ENCODE measurements at regions of chr17 and their contacts with region 1.

Region 1: GRCh38 chr17:68205251-68205807 is 42.5 kb upstream of the AMZ2 start:
- DNase-seq: peak; percentile 95
- ATAC-seq: peak; percentile 89
- H3K4me3 Mint-ChIP-seq: peak overlapping the region; percentile 86
- H3K27ac Mint-ChIP-seq: peak overlapping the region; percentile 88
- H3K4me1 Mint-ChIP-seq: peaks cover 28% of the 10 kb centered on the region
- H3K27me3 Mint-ChIP-seq: peaks cover 8% of the 10 kb centered on the region

Region 2: DNA sequence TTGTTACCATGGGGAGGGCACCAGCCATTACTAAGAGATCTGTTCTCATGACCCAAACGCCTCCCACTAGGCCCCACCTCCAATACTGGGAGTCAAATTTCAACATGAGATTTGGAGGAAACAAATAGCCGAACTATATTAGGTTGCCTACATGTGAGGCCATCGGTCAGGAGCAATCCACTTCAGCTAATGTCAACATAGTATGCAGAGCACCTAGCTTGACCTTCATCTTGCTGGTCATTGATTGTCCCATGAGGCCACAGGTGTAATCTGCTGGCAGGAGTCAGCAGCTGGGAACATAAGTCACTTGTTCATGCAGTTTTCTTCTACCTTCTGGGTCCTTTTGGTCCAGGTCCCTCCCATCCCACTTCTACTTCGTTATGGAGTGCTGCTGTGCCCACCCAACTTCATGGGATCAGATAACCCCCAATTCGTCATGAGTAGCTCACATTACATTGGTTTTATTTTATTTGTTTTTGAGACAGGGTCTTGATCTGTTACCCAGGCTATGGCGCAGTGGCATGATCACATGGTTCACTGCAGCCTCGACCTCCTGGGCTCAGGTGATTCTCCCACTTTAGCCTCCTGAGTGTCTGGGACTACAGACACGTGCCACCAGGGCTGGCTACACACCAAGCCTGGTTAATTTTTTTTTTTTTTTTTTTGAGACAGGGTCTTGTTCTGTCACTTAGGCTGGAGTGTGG is 175.7 kb before region 1 on chr17:
- CTCF ChIA-PET with region 1: no interaction called
- DNase-seq: no peak
- ATAC-seq: no peak
- H3K4me3 Mint-ChIP-seq: no peak overlapping the region
- H3K27ac Mint-ChIP-seq: no peak overlapping the region
- H3K4me1 Mint-ChIP-seq: peaks cover 2% of the 10 kb centered on the region
- H3K27me3 Mint-ChIP-seq: no peaks in the 10 kb centered on the region

Region 3: GRCh38 chr17:68172461-68172954 is 32.8 kb before region 1 on chr17:
- CTCF ChIA-PET with region 1: interaction called, 70 read pairs
- DNase-seq: peak; percentile 84
- ATAC-seq: peak; percentile 84
- H3K4me3 Mint-ChIP-seq: no peak overlapping the region
- H3K27ac Mint-ChIP-seq: no peak overlapping the region
- H3K4me1 Mint-ChIP-seq: peaks cover 25% of the 10 kb centered on the region
- H3K27me3 Mint-ChIP-seq: no peaks in the 10 kb centered on the region

Region 4: GRCh38 chr17:68184816-68185436 is 20.4 kb before region 1 on chr17:
- CTCF ChIA-PET with region 1: interaction called, 278 read pairs
- DNase-seq: peak; percentile 80
- ATAC-seq: peak; percentile 69
- H3K4me3 Mint-ChIP-seq: peak overlapping the region; percentile 85
- H3K27ac Mint-ChIP-seq: peak overlapping the region; percentile 92
- H3K4me1 Mint-ChIP-seq: peaks cover 63% of the 10 kb centered on the region
- H3K27me3 Mint-ChIP-seq: no peaks in the 10 kb centered on the region

Region 5: GRCh38 chr17:68247445-68248198 is 42.3 kb after region 1 on chr17 and contains the start of gene AMZ2:
- CTCF ChIA-PET with region 1: interaction called, 27 read pairs
- DNase-seq: peak; percentile 96
- ATAC-seq: peak; percentile 90
- H3K4me3 Mint-ChIP-seq: peak within 1 kb of the TSS; percentile 81
- H3K27ac Mint-ChIP-seq: peak within 1 kb of the TSS; percentile 91
- H3K4me1 Mint-ChIP-seq: peaks cover 48% of the 10 kb centered on the region
- H3K27me3 Mint-ChIP-seq: no peaks in the 10 kb centered on the region
- total RNA-seq, gene AMZ2: 106 to 107 TPM